ENCODE measurements at regions of chr6 and their contacts with region 1.

Region 1: DNA sequence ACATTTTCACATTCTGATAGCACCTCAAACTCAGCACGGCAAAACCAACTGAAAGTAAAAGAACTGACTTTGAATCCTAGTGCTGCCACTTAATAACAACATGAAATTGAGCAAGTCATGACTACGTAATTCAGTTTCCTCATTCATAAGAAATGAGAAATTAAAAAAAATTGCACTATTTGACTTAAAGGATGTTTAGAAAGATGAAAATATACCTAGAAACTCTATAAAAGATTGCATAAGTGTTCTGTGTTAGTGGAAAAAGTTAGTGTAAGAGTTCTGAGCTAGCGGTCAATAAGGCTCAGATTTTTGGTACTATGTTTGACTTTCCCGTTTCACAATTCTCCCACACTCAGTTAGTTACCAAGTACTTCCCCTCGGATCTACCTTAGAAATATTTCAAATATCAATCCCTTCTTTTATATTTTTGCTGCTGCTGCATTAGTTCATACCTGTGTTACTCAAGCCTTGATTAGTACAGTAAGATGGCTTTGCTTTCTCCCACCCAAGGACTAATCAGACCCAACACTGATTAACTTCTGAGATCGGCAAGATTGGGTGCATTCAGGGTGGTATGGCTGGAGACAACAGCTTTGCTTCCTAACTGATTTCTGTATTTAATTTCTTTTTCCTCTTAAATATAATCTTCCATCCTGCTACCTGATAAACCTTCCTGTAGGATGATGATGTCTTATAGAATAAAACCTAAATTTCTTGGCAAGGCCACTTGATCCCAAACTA is 25.9 kb downstream of the ECHDC1 start:
- DNase-seq: no peak
- ATAC-seq: no peak
- H3K4me3 ChIP-seq: peak overlapping the region in 1 of 10 donors; percentile 19
- H3K27ac ChIP-seq: peak overlapping the region in 1 of 10 donors; percentile 44
- H3K4me1 ChIP-seq: no peaks in the 10 kb centered on the region
- H3K27me3 ChIP-seq: no peaks in the 10 kb centered on the region
- CTCF ChIP-seq: no peak

Region 2: GRCh38 chr6:127332383-127332961 is 14.9 kb after region 1 on chr6:
- intact Hi-C with region 1: no loop called
- DNase-seq: no peak
- ATAC-seq: no peak
- H3K4me3 ChIP-seq: no peak overlapping the region
- H3K27ac ChIP-seq: no peak overlapping the region
- H3K4me1 ChIP-seq: peaks cover 0 to 17% (median 0%) of the 10 kb centered on the region in 9 donors
- H3K27me3 ChIP-seq: no peaks in the 10 kb centered on the region
- CTCF ChIP-seq: no peak

Region 3: DNA sequence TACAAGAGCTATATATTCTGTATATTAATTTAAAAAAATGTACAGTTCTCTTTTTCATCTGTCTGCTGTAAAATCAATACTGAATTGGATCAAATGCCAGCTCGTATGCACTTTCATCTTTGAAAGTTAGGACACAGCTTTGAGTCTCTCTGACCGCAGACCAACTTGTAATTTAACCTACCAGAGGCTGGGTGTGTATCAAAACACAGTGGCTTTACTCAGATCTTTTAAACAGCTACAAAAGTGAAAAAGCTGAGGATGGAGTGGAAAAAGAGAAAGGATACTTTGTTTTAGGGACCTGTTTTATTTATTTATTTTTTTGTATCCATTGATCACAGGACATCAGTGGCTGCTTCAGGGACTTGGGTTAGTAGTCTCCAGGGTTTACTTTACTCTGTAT is 97.5 kb after region 1 on chr6:
- intact Hi-C with region 1: loop called in 1 of 10 experiments (anchors 10 kb)
- DNase-seq: no peak
- ATAC-seq: no peak
- H3K4me3 ChIP-seq: no peak overlapping the region
- H3K27ac ChIP-seq: no peak overlapping the region
- H3K4me1 ChIP-seq: peaks cover 0 to 3% (median 0%) of the 10 kb centered on the region in 9 donors
- H3K27me3 ChIP-seq: no peaks in the 10 kb centered on the region
- CTCF ChIP-seq: no peak

Measured in heart right ventricle (tissue), 16 donors.